ENCODE measurements at regions of chr3 and their contacts with region 1.

Region 1: DNA sequence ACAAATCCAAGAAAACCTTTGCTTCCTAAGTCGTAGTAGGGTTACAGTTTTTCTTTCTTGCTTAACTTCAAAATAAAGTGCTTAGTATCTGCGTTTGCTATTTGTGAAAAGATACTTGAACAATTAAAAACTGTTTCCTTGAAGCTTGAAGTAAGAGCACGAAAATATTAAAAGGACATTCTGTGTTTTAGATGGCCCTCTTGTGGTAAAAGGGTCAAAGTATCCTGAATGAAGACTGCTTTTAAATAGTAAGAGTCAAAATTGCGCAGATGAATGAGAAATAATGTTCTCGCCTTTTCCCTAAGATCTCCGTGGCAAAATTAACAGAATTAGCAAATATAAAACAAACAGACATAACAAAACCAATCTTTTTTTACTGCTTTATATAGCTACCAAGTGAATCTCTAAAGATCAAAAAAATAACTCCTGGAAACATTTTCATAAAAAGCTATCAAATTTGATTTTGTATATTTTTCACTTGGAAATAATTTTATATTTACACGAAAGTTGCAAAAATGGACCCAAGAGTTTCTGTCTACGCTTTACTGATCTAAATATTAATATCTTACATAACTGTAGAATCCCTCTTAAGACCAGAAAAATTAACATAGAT is 175.4 kb downstream of the MBNL1 start:
- DNase-seq: no peak

Region 2: DNA sequence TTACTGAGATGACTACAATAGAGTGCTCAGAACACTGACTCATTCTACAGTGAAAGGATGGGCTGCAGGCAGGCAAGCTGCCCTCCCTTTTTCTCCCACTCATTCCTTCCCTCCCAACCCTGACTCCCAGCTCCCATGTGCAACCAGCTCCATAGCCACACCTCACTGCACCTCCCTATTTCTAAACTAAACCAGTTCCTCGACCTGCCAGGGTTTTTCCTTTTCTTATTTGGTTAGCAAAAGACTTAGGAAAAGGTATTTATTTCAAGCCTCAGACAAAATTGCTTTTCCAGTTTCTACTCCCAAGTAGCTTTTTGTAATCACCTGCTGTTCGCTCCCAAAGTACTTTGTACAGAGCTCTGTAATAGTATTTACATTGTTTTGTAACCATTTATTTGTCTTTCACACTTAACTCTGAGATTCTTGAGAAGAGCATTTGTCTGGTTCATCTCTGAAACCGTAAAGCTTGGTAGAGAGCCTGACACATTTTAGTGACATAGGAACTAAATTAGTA is 628.0 kb before region 1 on chr3:
- intact Hi-C with region 1: no loop called
- DNase-seq: no peak

Region 3: GRCh38 chr3:152071924-152072323 is 372.2 kb before region 1 on chr3:
- intact Hi-C with region 1: loop called (anchors 10 kb)
- DNase-seq: no peak

Region 4: DNA sequence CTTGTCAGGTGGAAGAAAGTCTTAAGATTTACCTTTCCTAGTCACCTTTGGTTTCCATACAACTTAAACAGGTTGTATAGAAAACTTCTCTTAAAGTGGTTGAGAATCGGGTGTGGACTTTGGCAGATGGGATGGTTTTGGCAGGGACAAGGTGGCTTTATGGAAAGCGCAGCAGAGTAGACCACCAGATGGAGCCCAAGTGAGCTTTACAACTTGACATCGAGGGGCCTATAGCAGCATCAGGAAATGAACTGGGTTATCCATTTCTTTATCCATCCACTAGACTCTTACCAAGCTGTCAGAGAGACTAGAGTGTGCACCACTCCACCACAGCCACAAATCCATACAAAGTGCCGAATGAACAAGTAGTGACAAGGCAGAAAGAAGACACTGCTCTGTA is 260.7 kb before region 1 on chr3:
- intact Hi-C with region 1: loop called (anchors 2 kb)
- DNase-seq: no peak

Region 5: DNA sequence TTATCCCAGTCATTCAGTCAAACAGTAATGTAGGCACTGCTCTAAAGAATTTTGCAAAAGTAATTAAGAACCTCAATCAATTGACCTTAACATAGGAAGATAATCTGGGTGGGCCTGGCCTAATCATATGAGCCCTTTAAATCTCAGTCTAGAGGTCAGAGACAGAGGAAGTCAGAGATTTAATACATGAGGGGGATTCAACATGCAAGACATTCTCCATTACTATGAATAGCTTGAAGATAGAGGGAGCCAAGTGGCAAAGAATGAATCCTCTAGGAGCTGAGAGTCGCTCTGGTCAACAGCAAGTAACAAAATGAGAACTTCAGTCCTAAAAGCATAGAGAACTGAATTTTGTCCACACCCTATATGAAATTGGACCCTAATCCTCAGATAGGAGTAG is 214.4 kb before region 1 on chr3:
- intact Hi-C with region 1: loop called (anchors 1 kb)
- DNase-seq: no peak

Region 6: GRCh38 chr3:152298393-152299242 is 145.5 kb before region 1 on chr3:
- intact Hi-C with region 1: loop called (anchors 10 kb)
- DNase-seq: no peak

Region 7: GRCh38 chr3:152328841-152329240 is 115.3 kb before region 1 on chr3:
- intact Hi-C with region 1: no loop called
- DNase-seq: no peak

Region 8: GRCh38 chr3:152480282-152480953 is 36.3 kb after region 1 on chr3:
- intact Hi-C with region 1: no loop called
- DNase-seq: no peak